ENCODE measurements at regions of chr4 and their contacts with region 1.

Region 1: GRCh38 chr4:37802068-37802666 is 24.3 kb upstream of the PGM2 start:
- DNase-seq: peak; percentile 50
- ATAC-seq: peak; percentile 73 to 76

Region 2: GRCh38 chr4:37686373-37687193 is 115.6 kb before region 1 on chr4 and contains the start of gene RELL1:
- intact Hi-C with region 1: loop called in 1 of 2 experiments (anchors 5 kb)
- DNase-seq: peak; percentile 99
- ATAC-seq: peak; percentile 96 to 97
- total RNA-seq, gene RELL1: 26.0 to 29.4 TPM

Region 3: GRCh38 chr4:37889849-37890800 is 88.0 kb after region 1 on chr4:
- intact Hi-C with region 1: loop called in 1 of 2 experiments (anchors 5 kb)
- DNase-seq: peak; percentile 80
- ATAC-seq: peak; percentile 86 to 88

Region 4: GRCh38 chr4:37953620-37954293 is 151.6 kb after region 1 on chr4:
- intact Hi-C with region 1: no loop called
- DNase-seq: no peak
- ATAC-seq: no peak

Region 5: GRCh38 chr4:38034986-38035882 is 233.1 kb after region 1 on chr4:
- intact Hi-C with region 1: loop called in 1 of 2 experiments (anchors 2 kb)
- DNase-seq: no peak
- ATAC-seq: peak; percentile 48 to 57